Panc1 (cell line): ENCODE measurements at regions of chr10 and their contacts with region 1.

Region 1: GRCh38 chr10:57605948-57606485 is 661.7 kb downstream of the IPMK start:
- DNase-seq: no peak
- ATAC-seq: no peak
- H3K4me3 ChIP-seq: no peak overlapping the region
- H3K27ac ChIP-seq: no peak overlapping the region
- H3K4me1 ChIP-seq: no peaks in the 10 kb centered on the region
- H3K27me3 ChIP-seq: no peaks in the 10 kb centered on the region
- CTCF ChIP-seq: no peak

Region 2: DNA sequence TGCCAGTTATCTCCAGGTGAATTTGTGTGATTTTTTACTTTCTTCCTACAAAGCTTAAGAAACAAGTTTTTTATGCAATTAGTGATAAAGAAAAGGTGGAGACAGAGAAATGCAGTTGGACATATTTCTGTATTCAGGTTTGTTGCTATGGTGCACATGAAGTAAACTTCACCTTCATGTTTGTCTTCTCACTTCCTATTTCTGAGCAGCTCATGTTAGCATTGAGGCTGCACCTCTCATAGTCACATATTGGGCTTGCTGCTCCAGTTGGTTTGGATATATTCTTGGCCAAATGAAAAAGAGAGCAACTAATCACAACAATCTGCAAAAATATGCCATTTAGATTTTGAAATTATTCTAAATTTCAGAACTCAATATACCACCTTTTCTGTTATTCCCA is 769.4 kb before region 1 on chr10:
- CTCF ChIA-PET with region 1: no interaction called
- POLR2A ChIA-PET with region 1: interaction called, 15 read pairs
- in situ Hi-C with region 1: no loop called
- intact Hi-C with region 1: no loop called
- DNase-seq: no peak
- ATAC-seq: no peak
- H3K4me3 ChIP-seq: no peak overlapping the region
- H3K27ac ChIP-seq: no peak overlapping the region
- H3K4me1 ChIP-seq: no peaks in the 10 kb centered on the region
- H3K27me3 ChIP-seq: no peaks in the 10 kb centered on the region
- CTCF ChIP-seq: no peak

Region 3: GRCh38 chr10:57579926-57580325 is 26.1 kb before region 1 on chr10:
- CTCF ChIA-PET with region 1: no interaction called
- POLR2A ChIA-PET with region 1: no interaction called
- in situ Hi-C with region 1: no loop called
- intact Hi-C with region 1: no loop called
- DNase-seq: peak; percentile 12
- ATAC-seq: peak; percentile 68; the same call in 1 of the 2 replicates
- H3K4me3 ChIP-seq: no peak overlapping the region
- H3K27ac ChIP-seq: no peak overlapping the region
- H3K4me1 ChIP-seq: no peaks in the 10 kb centered on the region
- H3K27me3 ChIP-seq: no peaks in the 10 kb centered on the region
- CTCF ChIP-seq: peak; percentile 50

Region 4: DNA sequence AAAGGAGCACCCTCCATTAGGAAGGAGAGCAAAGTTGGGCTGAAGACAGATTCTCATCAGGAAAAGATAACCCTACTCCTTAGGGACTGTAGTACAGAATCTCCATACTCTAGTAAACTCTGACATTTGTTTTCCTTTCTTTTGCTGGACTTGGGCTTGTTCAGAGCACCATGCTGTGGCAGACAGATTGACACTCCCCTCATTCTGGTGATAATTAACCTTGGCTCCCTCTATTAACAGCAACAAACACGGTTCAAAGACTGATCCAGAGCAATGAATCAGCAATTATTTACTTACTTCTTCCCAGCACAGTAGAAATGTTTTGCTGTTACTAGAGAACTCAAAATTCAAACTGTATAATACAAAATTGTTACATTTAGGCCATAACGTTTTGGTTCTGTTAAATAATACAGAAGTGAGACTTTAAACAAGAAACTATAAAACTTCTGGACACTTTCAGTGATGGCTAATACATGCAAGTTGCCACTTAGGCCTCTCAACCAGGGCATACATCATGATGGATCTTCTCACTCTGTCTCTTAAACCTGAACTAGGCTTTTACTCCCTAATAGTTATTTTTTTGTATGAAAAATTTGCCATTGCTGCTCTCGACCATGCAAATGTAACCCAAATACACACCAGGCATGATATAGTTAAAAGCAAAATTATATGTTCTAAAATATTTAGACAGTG is 22.7 kb after region 1 on chr10:
- CTCF ChIA-PET with region 1: no interaction called
- POLR2A ChIA-PET with region 1: no interaction called
- in situ Hi-C with region 1: no loop called
- intact Hi-C with region 1: no loop called
- DNase-seq: no peak
- ATAC-seq: no peak
- H3K4me3 ChIP-seq: no peak overlapping the region
- H3K27ac ChIP-seq: no peak overlapping the region
- H3K4me1 ChIP-seq: no peaks in the 10 kb centered on the region
- H3K27me3 ChIP-seq: no peaks in the 10 kb centered on the region
- CTCF ChIP-seq: no peak

Region 5: DNA sequence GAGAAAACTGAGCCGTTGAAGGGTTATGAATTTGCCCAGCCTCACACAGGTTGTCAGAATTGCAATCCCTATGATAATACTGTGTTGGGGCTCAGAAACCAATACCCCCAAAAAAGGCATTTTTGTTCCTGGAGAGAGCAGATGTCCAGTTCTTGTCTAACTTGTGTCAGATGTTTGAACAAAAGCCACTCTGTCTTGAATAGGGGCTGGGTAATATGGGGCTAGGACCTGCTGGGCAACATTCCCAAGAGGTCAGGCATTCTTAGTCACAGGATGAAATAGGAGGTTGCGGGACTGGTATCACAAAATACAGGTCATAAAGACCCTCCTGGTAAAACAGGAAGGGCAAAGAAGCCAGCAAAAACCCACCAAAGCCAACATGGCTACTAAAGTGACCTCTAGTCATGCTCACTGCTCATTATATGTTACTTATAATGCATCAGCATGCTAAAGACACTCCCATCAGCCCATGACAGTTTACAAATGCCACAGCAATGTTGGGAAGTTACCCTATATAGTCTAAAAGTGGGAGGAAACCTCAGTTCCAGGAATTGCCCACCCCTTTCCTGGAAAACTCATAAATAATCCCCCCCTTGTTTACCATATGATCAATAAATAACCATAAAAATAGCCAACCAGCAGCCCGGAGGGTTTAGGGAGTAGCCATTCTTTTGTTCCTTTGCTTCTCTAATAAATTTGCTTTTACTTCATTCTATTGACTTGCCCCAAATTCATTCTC is 179.7 kb after region 1 on chr10:
- CTCF ChIA-PET with region 1: no interaction called
- POLR2A ChIA-PET with region 1: no interaction called
- in situ Hi-C with region 1: no loop called
- intact Hi-C with region 1: no loop called
- DNase-seq: no peak
- ATAC-seq: no peak
- H3K4me3 ChIP-seq: no peak overlapping the region
- H3K27ac ChIP-seq: no peak overlapping the region
- H3K4me1 ChIP-seq: no peaks in the 10 kb centered on the region
- H3K27me3 ChIP-seq: no peaks in the 10 kb centered on the region
- CTCF ChIP-seq: no peak